ENCODE measurements at regions of chr1 and their contacts with region 1.

Region 1: GRCh38 chr1:15538770-15539169 is 12.1 kb downstream of the DNAJC16 start:
- DNase-seq: no peak
- H3K4me3 ChIP-seq: no peak overlapping the region
- H3K27ac ChIP-seq: no peak overlapping the region
- H3K4me1 ChIP-seq: no peaks in the 10 kb centered on the region
- H3K27me3 ChIP-seq: no peaks in the 10 kb centered on the region
- CTCF ChIP-seq: no peak
- POLR2A ChIP-seq: no peak

Region 2: GRCh38 chr1:13583966-13584791 is 1954.6 kb before region 1 on chr1:
- intact Hi-C with region 1: loop called (anchors 5 kb)
- DNase-seq: peak in 1 of 2 donors; percentile 79
- H3K4me3 ChIP-seq: peak overlapping the region; percentile 55 to 80 (median 62)
- H3K27ac ChIP-seq: peak overlapping the region; percentile 90 to 97
- H3K4me1 ChIP-seq: no peaks in the 10 kb centered on the region
- H3K27me3 ChIP-seq: peaks cover 0 to 27% of the 10 kb centered on the region in 2 donors
- CTCF ChIP-seq: no peak
- POLR2A ChIP-seq: no peak

Region 3: GRCh38 chr1:15246960-15247614 is 291.7 kb before region 1 on chr1 and contains the start of gene FHAD1:
- intact Hi-C with region 1: no loop called
- DNase-seq: peak; percentile 44 to 66
- H3K4me3 ChIP-seq: peak within 1 kb of the TSS; percentile 24 to 67 (median 60)
- H3K27ac ChIP-seq: peak within 1 kb of the TSS; percentile 38 to 76
- H3K4me1 ChIP-seq: no peaks in the 10 kb centered on the region
- H3K27me3 ChIP-seq: no peaks in the 10 kb centered on the region
- CTCF ChIP-seq: no peak
- POLR2A ChIP-seq: no peak
- total RNA-seq, gene FHAD1: 1.0 to 2.3 TPM in 2 of 3 donors, not detected in the other

Region 4: DNA sequence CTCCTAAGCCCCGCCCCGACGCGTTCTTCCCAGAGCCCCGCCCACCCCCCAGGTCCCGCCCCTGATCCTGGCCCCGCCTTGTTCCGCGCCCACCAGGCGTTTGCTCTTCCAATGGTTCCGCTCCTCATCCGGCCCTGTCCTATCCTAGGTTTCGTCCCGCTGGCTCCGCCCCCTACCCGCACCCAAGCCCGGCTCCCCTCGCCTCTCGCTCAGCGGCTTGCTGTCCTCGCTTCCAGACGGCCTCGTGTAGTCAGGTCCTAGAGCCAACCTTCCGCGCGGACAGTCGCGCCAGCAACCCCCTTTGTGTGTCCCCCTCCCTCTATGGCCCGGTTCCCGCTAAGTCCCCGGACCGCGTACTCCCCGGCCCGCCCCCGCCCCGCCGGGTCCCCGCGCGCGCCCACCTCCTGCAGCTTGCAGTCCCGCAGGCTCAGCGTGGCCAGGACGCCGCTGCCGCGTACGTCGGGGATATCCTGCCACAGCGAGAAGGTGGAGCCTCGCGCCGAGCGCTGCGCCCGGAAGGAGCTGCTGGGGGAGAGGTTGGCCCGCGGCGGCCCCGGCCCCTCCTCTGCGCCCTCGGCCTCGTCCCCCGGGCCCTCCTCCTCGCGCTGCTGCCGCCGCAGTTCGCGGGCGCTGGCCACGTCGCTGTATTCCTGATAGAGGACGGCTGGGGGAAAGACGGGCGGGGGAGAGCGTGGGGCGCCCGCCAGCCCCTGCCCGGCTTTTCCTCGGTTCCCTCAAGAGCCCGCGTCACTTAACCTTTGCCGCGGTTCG is 668.0 kb after region 1 on chr1:
- intact Hi-C with region 1: loop called (anchors 10 kb)
- DNase-seq: peak; percentile 97
- H3K4me3 ChIP-seq: peak overlapping the region; percentile 48 to 75 (median 69)
- H3K27ac ChIP-seq: peak overlapping the region; percentile 87 to 92
- H3K4me1 ChIP-seq: peaks cover 0 to 15% of the 10 kb centered on the region in 2 donors
- H3K27me3 ChIP-seq: no peaks in the 10 kb centered on the region
- CTCF ChIP-seq: no peak
- POLR2A ChIP-seq: no peak

Measured in breast epithelium (tissue), 4 donors.